Upper lobe of right lung (tissue), 1 donor: ENCODE measurements at regions of chr1 and their contacts with region 1.

Region 1: DNA sequence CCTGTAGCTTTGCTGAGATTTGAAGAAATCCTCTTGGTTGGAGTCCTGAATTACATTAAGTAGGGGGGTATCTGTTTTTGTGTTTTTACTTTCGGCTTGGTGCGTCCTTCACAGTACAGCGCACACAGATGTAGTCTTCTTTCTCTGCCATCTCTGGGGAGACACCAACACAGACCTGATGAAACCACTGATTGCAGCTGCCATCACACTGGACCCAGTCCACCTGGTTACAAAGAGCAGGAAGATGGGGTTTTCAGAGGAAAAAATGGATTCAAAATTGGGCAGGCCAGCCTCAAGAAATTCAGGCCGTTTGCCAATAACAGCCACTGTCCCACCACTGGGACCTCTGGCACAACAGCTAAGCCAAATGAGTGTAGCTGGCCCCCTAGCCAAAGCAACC is 18.7 kb upstream of the SYT2 start:
- DNase-seq: no peak
- ATAC-seq: no peak
- H3K4me3 ChIP-seq: no peak overlapping the region
- H3K27ac ChIP-seq: no peak overlapping the region
- H3K4me1 ChIP-seq: no peaks in the 10 kb centered on the region
- H3K27me3 ChIP-seq: no peaks in the 10 kb centered on the region
- CTCF ChIP-seq: no peak

Region 2: GRCh38 chr1:202599677-202600431 is 129.1 kb before region 1 on chr1:
- intact Hi-C with region 1: loop called (anchors 10 kb)
- DNase-seq: peak; percentile 79
- ATAC-seq: peak; percentile 87
- H3K4me3 ChIP-seq: no peak overlapping the region
- H3K27ac ChIP-seq: no peak overlapping the region
- H3K4me1 ChIP-seq: no peaks in the 10 kb centered on the region
- H3K27me3 ChIP-seq: no peaks in the 10 kb centered on the region
- CTCF ChIP-seq: peak; percentile 64